AG04449 (cell line): ENCODE measurements at regions of chr5 and their contacts with region 1.

Region 1: GRCh38 chr5:82406205-82406773 is 128.1 kb upstream of the RPS23 start:
- DNase-seq: peak; percentile 91
- H3K4me3 ChIP-seq: no peak overlapping the region
- CTCF ChIP-seq: no peak

Region 2: GRCh38 chr5:82018462-82018861 is 387.8 kb before region 1 on chr5:
- CTCF ChIA-PET with region 1: no interaction called
- POLR2A ChIA-PET with region 1: no interaction called
- DNase-seq: no peak
- H3K4me3 ChIP-seq: no peak overlapping the region
- CTCF ChIP-seq: no peak

Region 3: DNA sequence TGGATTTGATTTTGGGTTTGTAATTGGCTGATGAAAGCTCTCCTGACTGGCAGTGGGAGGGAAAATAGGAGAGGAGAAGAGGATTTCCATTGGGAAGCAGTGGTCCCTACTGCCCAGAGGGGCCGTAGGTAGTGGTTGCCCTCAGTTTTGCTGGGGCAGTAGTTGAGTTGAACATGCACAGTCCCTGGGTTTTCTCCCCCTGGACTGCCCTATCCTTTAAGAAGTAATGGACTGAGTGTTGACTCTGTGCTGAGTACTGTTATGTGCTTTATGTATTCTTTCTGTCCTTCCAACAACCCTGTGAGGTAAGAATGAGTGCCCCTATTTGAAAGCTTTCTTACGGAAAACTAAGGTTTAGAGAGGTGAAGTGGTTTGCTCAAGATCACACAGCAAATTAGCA is 16.9 kb before region 1 on chr5:
- CTCF ChIA-PET with region 1: no interaction called
- POLR2A ChIA-PET with region 1: interaction called, 11 read pairs
- DNase-seq: no peak
- H3K4me3 ChIP-seq: no peak overlapping the region; the same call in 1 of the 2 replicates
- CTCF ChIP-seq: no peak